Psoas muscle (tissue), 8 donors: ENCODE measurements at regions of chr5 and their contacts with region 1.

Region 1: GRCh38 chr5:124706729-124707361 is 39.6 kb downstream of the ZNF608 start:
- DNase-seq: no peak
- ATAC-seq: peak; percentile 29 to 55 (median 36)
- H3K4me3 ChIP-seq: no peak overlapping the region
- H3K27ac ChIP-seq: no peak overlapping the region
- H3K4me1 ChIP-seq: peaks cover 43% of the 10 kb centered on the region
- H3K27me3 ChIP-seq: no peaks in the 10 kb centered on the region
- CTCF ChIP-seq: no peak

Region 2: DNA sequence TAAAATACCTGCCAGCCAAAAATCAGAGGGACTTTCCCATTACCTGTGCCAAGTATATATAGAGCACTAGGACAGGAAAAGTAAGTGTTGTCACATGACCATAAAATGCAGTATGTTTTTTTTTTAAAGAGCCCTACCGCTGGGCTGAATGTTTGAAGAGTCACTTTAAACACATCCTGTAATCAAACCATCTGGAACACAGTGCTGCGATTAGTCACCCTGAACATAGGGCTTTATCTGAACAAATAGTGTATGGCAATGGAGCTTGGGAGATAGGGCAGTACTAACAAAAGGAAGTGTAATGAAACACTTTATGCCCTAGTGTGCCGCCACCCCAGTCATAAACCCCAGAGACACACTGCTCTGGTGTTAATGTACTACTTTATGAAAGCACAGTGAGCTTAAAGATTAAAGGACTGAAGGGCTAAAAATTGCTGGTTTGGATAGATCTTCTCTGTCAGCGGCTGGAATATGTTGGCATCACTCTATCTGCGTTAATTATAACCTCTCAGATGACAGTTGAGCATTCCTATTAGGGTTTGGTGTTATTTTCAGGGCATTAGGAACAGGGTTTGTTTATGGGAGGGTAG is 50.8 kb before region 1 on chr5:
- intact Hi-C with region 1: loop called in 1 of 2 experiments (anchors 5 kb)
- DNase-seq: no peak
- ATAC-seq: peak; percentile 76 to 84 (median 77)
- H3K4me3 ChIP-seq: peak overlapping the region; percentile 50
- H3K27ac ChIP-seq: peak overlapping the region; percentile 84
- H3K4me1 ChIP-seq: peaks cover 55% of the 10 kb centered on the region
- H3K27me3 ChIP-seq: no peaks in the 10 kb centered on the region
- CTCF ChIP-seq: no peak

Region 3: GRCh38 chr5:124741711-124742496 is 35.1 kb after region 1 on chr5:
- intact Hi-C with region 1: loop called in 1 of 2 experiments (anchors 5 kb)
- DNase-seq: no peak
- ATAC-seq: no peak
- H3K4me3 ChIP-seq: peak overlapping the region; percentile 83
- H3K27ac ChIP-seq: peak overlapping the region; percentile 95
- H3K4me1 ChIP-seq: peaks cover 61% of the 10 kb centered on the region
- H3K27me3 ChIP-seq: no peaks in the 10 kb centered on the region
- CTCF ChIP-seq: no peak